K562 (cell line): ENCODE measurements at regions of chr20 and their contacts with region 1.

Region 1: DNA sequence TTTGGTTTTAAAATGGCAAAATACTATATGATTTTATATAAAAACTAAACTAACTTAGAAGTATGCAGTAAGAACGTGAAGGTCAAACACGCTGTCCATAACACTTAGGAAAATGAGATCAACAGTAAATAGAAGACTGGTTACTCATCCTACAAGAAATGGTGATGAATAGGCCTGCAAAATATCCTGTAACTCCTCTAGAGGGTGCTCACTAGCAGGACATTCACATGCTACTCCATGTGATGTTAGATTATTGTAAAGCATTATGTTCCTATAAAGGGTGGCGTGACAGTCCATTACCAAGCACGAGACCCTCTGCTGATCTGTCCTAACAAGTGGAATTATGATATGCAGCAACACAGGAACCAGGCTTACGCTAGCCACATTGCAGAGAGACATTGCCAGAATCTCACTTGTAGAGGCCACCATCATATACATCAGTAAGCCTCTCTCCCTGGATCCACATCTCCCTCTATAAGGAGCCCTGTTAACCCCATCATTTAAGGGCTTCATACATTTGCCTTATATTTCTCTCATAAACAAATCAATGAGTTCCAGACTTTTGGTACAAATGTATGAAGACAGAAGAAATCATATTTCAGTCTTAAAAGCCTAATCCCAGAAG is 18.0 kb upstream of the DEFB129 start:
- DNase-seq: peak; percentile 6 to 53 (median 20)
- ATAC-seq: peak; percentile 92
- H3K4me3 ChIP-seq: no peak overlapping the region
- H3K27ac ChIP-seq: no peak overlapping the region
- H3K4me1 ChIP-seq: peaks cover 0 to 2% of the 10 kb centered on the region in 2 experiments; a peak in 1 of 5 replicates
- H3K27me3 ChIP-seq: no peaks in the 10 kb centered on the region; a peak in 2 of 5 replicates
- CTCF ChIP-seq: peak; percentile 53 to 70 (median 63)
- EP300 ChIP-seq: no peak
- POLR2A ChIP-seq: no peak
- RAD21 ChIP-seq: peak; percentile 77 to 82

Region 2: GRCh38 chr20:189611-190010 is 19.4 kb before region 1 on chr20 and contains the start of gene DEFB128:
- CTCF ChIA-PET with region 1: no interaction called
- POLR2A ChIA-PET with region 1: no interaction called
- in situ Hi-C with region 1: no loop called
- intact Hi-C with region 1: no loop called
- DNase-seq: no peak
- ATAC-seq: no peak
- H3K4me3 ChIP-seq: no peak within 1 kb of the TSS
- H3K27ac ChIP-seq: no peak within 1 kb of the TSS
- H3K4me1 ChIP-seq: no peaks in the 10 kb centered on the region
- H3K27me3 ChIP-seq: no peaks in the 10 kb centered on the region; a peak in 2 of 5 replicates
- CTCF ChIP-seq: no peak
- EP300 ChIP-seq: no peak
- POLR2A ChIP-seq: no peak
- RAD21 ChIP-seq: no peak
- polyA plus RNA-seq, gene DEFB128: not detected

Region 3: GRCh38 chr20:266596-267562 is 57.8 kb after region 1 on chr20:
- CTCF ChIA-PET with region 1: interaction called, 4 read pairs
- POLR2A ChIA-PET with region 1: no interaction called
- in situ Hi-C with region 1: no loop called
- intact Hi-C with region 1: loop called (anchors 5 kb)
- DNase-seq: peak; percentile 87 to 92 (median 88)
- ATAC-seq: peak; percentile 91
- H3K4me3 ChIP-seq: 0 out of 2 replicates have a peak overlapping the region, but pooled peaks have one; percentile 17
- H3K27ac ChIP-seq: peak overlapping the region; percentile 71
- H3K4me1 ChIP-seq: peaks cover 9 to 18% of the 10 kb centered on the region in 2 experiments; a peak in 4 of 5 replicates
- H3K27me3 ChIP-seq: no peaks in the 10 kb centered on the region
- CTCF ChIP-seq: peak; percentile 86 to 96 (median 88)
- EP300 ChIP-seq: peak; percentile 52; the same call in 1 of the 2 replicates
- POLR2A ChIP-seq: peak; percentile 68
- RAD21 ChIP-seq: peak; percentile 86 to 94